Activated CD8-positive, alpha-beta T cell treated with anti-CD3 and anti-CD28 coated beads for 36 hours (primary cell): ENCODE measurements at regions of chr13 and their contacts with region 1.

Region 1: DNA sequence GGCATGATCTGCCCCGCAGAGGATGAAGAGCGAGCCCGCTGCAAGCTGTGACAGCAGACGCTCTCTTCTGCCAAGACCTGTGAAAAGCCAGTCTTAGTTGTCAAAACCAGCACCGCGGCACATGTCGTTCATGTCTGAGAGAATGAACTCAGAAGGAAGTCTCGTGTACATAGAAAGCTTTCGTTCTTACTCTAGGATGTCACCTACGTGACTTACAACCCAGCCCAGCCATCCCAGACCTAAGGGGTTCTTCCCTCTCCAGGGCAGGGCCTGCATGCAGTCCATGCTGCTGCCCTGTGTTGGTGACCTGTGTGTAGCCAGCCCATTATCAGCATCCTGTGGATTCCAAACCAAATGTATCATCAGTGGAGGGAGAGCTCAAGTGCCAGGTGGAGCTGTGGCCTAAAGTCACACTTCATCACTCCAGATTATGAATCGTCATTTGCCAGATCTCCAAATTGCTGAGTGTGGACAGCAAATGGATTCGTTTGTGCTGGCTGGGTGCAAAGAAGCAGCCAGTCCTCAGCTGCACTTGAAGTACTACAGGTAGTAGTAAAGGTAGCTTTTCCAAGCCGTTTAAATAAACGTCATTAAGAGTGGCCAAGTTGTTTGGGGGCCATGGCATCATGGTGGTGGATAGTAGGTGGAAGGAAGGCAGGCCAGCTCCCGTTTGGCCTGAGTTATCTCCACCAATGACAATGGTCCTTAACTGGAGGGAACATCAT is 73.9 kb upstream of the GPR183 start:
- DNase-seq: peak; percentile 90
- ATAC-seq: peak; percentile 68
- H3K4me3 Mint-ChIP-seq: no peak overlapping the region
- H3K27ac Mint-ChIP-seq: peak overlapping the region; percentile 86
- H3K4me1 Mint-ChIP-seq: peaks cover 89% of the 10 kb centered on the region
- H3K27me3 Mint-ChIP-seq: no peaks in the 10 kb centered on the region
- CTCF ChIP-seq: no peak

Region 2: DNA sequence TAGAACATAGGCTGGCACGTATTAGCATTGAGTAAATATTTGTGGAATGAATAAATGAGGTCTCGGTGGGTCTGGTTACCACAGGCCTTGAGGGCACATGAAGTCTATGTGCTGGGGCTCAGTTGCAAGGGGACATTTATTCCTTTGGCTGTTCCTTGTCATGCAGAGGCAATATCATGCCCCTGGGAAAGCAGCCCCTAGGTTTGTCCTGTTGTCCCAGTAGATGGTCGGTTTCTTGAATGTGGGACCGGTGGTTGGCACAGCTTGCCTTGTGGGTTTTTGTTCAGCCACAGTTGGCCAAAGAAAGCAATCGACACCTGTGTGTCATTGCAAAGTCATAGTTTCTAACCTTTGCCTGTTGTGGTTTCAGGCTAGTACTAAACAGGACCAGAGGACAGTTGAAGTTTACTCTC is 49.2 kb before region 1 on chr13:
- CTCF ChIA-PET with region 1: no interaction called
- POLR2A ChIA-PET with region 1: no interaction called
- intact Hi-C with region 1: no loop called
- DNase-seq: peak; percentile 57
- ATAC-seq: peak; percentile 80
- H3K4me3 Mint-ChIP-seq: no peak overlapping the region
- H3K27ac Mint-ChIP-seq: peak overlapping the region; percentile 60
- H3K4me1 Mint-ChIP-seq: peaks cover 68% of the 10 kb centered on the region
- H3K27me3 Mint-ChIP-seq: no peaks in the 10 kb centered on the region
- CTCF ChIP-seq: no peak

Region 3: DNA sequence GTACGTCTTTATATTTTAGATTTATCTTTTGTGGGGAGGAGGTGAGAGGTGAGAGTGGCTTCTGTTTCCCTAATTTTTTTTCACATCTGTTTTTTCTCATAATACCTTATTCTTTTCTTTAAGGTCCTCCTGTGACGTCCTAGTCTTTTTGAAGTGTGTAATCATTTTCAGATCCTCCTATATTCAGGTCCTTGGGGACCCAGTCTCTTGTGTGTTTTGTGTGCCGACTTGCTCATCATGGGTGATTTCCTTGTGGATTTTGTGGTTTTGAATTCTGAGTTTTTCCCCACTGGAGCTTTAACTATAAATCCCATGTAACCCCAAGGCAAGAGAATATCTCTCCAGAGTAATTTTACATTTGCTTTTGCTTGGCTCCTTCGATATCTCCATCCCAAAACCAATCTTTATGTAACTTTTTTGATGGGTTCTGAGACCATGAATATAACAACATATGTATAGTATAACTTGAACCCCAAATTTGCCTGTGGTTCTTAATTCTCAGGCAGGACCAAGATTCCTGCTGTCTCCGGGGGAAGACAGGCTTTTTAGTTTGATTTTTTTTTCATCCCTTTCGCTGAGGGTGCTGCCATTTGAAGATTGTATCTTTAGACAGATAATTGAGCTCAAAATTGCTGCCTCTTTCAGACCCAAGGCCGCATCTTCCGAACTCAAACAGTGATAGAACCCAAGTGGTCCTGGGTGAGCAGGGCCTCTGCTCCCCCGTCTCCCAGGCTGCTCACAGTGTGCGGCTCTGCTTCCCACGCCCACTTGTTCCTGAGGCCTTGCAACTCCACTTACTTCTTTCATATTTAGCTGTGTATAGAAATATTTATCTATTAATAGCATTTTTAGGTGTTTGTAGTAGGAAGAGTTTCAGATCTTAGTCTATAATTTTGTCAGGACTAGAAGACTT is 14.8 kb before region 1 on chr13:
- CTCF ChIA-PET with region 1: interaction called, 13 read pairs
- POLR2A ChIA-PET with region 1: interaction called, 14 read pairs
- intact Hi-C with region 1: no loop called
- DNase-seq: peak; percentile 48
- ATAC-seq: peak; percentile 22
- H3K4me3 Mint-ChIP-seq: peak overlapping the region; percentile 38
- H3K27ac Mint-ChIP-seq: peak overlapping the region; percentile 61
- H3K4me1 Mint-ChIP-seq: peaks cover 87% of the 10 kb centered on the region
- H3K27me3 Mint-ChIP-seq: no peaks in the 10 kb centered on the region
- CTCF ChIP-seq: no peak

Region 4: GRCh38 chr13:99417201-99418102 is 36.4 kb after region 1 on chr13:
- CTCF ChIA-PET with region 1: interaction called, 73 read pairs
- POLR2A ChIA-PET with region 1: interaction called, 4 read pairs
- intact Hi-C with region 1: no loop called
- DNase-seq: peak; percentile 55
- ATAC-seq: no peak
- H3K4me3 Mint-ChIP-seq: no peak overlapping the region
- H3K27ac Mint-ChIP-seq: no peak overlapping the region
- H3K4me1 Mint-ChIP-seq: peaks cover 64% of the 10 kb centered on the region
- H3K27me3 Mint-ChIP-seq: no peaks in the 10 kb centered on the region
- CTCF ChIP-seq: no peak